ENCODE measurements at regions of chr7 and their contacts with region 1.

Region 1: DNA sequence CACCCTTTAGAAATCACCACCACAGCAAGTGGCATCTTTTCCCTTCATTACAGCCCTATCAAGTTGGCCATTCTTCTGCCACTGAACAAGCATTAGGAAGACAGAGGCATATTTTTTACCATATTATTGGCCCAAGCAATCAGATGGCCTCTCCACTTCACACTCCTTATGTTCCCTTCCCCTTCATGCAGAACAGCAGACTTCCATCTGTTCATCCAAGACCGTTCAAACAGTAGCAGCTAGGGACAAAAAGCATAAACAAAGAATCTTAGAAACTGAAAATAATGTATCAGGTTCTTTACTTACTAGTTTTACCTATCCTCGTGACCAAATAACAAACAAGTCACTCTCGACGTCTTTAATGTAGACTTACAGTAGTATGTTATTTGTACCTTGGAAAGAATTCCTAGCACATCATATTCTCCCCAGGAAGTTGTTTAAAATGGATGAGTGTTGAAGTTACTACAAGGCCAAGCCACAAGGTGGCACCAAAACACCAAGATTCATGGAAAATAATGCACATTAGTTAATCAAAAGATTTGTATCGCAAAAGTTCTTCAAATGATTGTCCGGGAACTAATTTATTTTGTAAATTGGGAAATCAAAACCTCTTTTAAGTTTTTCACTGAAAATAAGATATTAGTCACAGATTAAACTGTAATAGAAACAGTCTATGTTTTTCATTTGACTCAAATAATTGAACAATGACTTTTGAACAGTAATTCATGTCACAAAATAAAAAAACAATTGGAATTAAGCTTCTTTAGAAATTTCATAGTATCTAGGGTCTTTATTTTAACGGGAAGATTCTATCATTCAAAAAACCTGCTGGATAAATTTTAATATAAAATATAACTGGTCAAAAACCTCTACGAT is 112.1 kb downstream of the VPS41 start:
- DNase-seq: peak in 5 of 10 donors; percentile 42 to 77 (median 63)
- H3K4me3 ChIP-seq: no peak overlapping the region
- H3K27ac ChIP-seq: peak overlapping the region in 6 of 59 donors; percentile 5 to 62 (median 27)
- H3K27me3 ChIP-seq: no peaks in the 10 kb centered on the region
- CTCF ChIP-seq: peak; percentile 73 to 99 (median 88)

Region 2: DNA sequence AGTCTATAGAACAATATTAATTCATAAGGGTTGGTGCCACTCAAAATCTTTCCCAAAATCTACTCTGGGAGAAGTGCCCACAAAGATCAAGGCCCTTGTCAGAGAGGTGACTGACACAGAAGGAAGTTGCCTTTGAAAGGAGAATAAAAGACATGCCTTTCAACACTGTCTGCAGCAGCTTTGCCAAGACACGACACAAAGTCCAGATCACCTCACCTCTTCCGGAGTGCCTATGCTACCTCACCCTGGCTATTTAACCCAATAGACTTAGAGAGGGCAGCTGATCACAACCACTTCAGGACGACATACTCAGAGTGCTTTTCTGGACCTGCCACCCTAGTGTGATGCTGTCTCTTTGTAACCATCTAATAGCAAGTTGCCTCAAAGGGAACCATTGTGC is 720.4 kb after region 1 on chr7:
- intact Hi-C with region 1: loop called (anchors 5 kb)
- DNase-seq: no peak
- H3K4me3 ChIP-seq: no peak overlapping the region
- H3K27ac ChIP-seq: no peak overlapping the region
- H3K27me3 ChIP-seq: no peaks in the 10 kb centered on the region
- CTCF ChIP-seq: no peak